ENCODE measurements at regions of chr2 and their contacts with region 1.

Region 1: DNA sequence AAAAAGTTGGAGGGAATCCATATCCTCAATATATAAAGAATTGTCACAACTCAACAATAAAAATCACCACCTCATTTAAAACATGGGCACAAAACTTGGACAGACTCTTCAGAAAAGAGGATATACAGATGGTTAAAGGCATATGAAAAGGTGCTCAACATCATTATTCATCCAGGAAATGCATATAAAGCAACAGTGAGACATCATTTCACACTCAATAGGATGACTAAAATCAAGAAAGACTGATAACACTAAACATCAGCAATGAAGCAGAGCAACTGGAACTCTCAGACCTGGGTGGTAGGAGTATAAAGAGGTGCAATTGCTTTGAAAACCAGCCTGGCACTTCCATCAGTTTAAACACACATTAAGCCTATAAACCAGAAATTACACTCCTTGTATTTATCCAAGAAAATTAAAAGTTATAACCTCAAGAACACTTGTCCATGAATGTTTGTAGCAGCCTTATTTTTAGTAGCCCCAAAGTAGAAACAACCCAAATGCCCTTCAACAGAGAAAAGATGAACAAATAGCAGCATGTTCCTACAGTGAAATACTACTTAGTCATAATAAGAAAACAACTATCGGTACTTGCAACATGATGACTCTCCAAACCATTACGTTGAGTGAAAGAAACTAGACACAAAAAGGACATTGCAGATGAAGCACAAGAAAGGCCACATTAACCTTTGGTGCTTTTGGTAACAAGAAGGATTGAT is 79.1 kb upstream of the TANC1 start:
- DNase-seq: no peak
- H3K4me3 ChIP-seq: no peak overlapping the region
- H3K27ac ChIP-seq: no peak overlapping the region
- H3K4me1 ChIP-seq: peaks cover 33% of the 10 kb centered on the region
- H3K27me3 ChIP-seq: no peaks in the 10 kb centered on the region
- CTCF ChIP-seq: no peak

Region 2: DNA sequence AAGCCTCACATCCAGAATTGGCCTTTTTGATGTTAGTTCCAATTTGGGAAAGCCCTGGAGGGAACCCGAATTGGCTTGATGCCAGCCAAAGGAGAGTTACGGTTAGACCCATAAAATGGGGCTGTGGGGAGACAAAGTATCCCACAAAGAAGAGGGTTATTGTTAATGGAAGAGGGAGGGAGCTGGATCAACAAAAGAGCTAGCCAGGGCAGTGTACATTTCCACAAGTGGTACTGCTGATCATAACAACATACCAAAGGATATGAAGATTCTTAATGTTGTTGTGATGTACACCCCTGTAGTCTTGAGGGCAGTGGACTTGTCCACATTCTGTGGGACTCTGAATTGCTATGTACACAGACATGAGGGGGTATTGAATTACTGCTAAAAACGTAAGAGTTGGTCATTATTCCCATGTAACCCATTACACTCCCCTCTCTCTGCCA is 84.2 kb after region 1 on chr2:
- CTCF ChIA-PET with region 1: no interaction called
- POLR2A ChIA-PET with region 1: no interaction called
- intact Hi-C with region 1: no loop called
- DNase-seq: no peak
- H3K4me3 ChIP-seq: no peak overlapping the region
- H3K27ac ChIP-seq: no peak overlapping the region
- H3K4me1 ChIP-seq: peaks cover 38% of the 10 kb centered on the region
- H3K27me3 ChIP-seq: no peaks in the 10 kb centered on the region
- CTCF ChIP-seq: no peak

Region 3: DNA sequence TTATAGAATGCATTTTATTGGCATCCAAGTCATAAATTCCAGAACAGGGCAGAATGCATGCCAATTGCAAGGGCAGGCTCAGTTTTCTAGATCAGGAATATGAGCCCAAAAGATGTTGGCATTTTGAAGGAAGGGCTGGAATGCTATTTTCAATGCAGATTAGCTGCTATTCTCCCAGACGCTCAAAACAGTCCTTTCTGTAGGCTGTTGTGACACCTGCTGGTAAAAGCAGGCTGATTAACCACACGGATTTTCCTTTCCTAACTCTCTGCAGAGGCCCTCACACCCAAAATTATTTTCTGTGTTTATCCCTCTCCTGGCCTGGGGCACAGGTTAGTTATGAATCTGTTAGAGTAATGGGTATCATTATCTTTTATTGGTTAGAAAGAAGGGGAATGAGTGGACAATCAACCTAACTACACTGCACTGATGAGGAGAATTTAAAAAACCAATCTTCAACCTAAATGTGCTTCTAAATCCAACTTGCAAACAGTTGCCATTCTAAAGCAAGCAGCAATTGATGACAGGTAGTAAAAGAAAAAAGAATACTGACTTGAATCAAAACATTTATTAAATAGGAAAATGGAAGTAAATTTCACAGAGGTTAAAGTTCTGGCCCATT is 1079.1 kb after region 1 on chr2:
- CTCF ChIA-PET with region 1: no interaction called
- POLR2A ChIA-PET with region 1: no interaction called
- intact Hi-C with region 1: loop called (anchors 10 kb)
- DNase-seq: peak in 1 of 2 experiments; percentile 13
- H3K4me3 ChIP-seq: no peak overlapping the region
- H3K27ac ChIP-seq: no peak overlapping the region
- H3K4me1 ChIP-seq: no peaks in the 10 kb centered on the region
- H3K27me3 ChIP-seq: no peaks in the 10 kb centered on the region
- CTCF ChIP-seq: peak; percentile 50